Activated B cell treated with CpG ODN at 0.5 μM for 24 hours (primary cell): ENCODE measurements at regions of chr12 and their contacts with region 1.

Region 1: GRCh38 chr12:64403707-64404469 is at the start of gene XPOT:
- DNase-seq: peak; percentile 88
- ATAC-seq: peak; percentile 91
- H3K4me3 Mint-ChIP-seq: peak within 1 kb of the TSS; percentile 96
- H3K27ac Mint-ChIP-seq: peak within 1 kb of the TSS; percentile 96
- H3K4me1 Mint-ChIP-seq: peaks cover 16% of the 10 kb centered on the region
- H3K27me3 Mint-ChIP-seq: peaks cover 3% of the 10 kb centered on the region
- CTCF ChIP-seq: no peak
- total RNA-seq, gene XPOT: 81.3 and 96.2 TPM in 2 replicates

Region 2: GRCh38 chr12:62466594-62467491 is 1937.0 kb before region 1 on chr12 and contains the start of gene MON2:
- CTCF ChIA-PET with region 1: no interaction called
- POLR2A ChIA-PET with region 1: no interaction called
- intact Hi-C with region 1: loop called (anchors 5 kb)
- DNase-seq: peak; percentile 85
- ATAC-seq: peak; percentile 96
- H3K4me3 Mint-ChIP-seq: peak within 1 kb of the TSS; percentile 84
- H3K27ac Mint-ChIP-seq: peak within 1 kb of the TSS; percentile 84
- H3K4me1 Mint-ChIP-seq: peaks cover 28% of the 10 kb centered on the region
- H3K27me3 Mint-ChIP-seq: no peaks in the 10 kb centered on the region
- CTCF ChIP-seq: no peak
- total RNA-seq, gene MON2: 51.6 and 69.9 TPM in 2 replicates

Region 3: DNA sequence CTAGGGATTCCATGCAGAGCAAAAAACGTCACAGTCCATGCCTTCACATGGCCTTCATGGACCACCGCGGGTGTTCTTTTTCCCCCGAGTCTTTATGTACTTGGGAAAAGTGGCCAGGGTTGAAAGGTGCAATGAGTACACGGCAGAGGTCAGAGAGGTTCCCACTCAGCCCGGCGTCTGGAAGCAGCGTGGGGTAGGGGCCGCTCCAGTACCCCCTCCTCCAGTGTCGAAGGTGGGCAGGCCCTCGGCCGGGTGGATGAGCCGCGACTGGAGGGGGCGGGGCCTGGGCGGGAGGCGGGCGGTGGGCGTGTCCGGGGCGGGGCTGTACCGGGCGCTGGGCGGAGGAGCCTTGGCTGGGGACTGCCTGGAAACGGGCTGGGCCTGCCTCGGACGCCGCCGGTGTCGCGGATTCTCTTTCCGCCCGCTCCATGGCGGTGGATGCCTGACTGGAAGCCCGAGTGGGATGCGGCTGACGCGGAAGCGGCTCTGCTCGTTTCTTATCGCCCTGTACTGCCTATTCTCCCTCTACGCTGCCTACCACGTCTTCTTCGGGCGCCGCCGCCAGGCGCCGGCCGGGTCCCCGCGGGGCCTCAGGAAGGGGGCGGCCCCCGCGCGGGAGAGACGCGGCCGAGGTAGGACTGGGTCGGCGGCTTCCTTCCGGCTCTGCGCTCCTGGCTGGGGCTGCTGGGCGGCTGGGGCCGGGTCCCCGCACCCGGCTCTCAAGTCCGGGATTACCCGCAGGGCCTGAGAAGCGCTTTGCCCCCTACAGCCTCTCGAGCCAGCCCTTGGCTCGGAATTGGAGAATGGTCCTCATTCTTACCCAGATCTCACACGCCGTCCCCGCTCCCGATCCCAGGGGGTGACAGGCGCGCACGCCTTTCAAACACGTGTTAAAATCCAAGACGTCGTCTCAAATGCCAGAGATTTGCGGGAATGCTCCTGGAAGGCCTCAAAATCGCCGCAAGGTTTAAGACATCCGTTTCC is 624.1 kb before region 1 on chr12 and contains the start of gene RXYLT1:
- CTCF ChIA-PET with region 1: no interaction called
- POLR2A ChIA-PET with region 1: no interaction called
- intact Hi-C with region 1: loop called (anchors 1 kb)
- DNase-seq: peak; percentile 82
- ATAC-seq: peak; percentile 93
- H3K4me3 Mint-ChIP-seq: peak within 1 kb of the TSS; percentile 98
- H3K27ac Mint-ChIP-seq: peak within 1 kb of the TSS; percentile 90
- H3K4me1 Mint-ChIP-seq: peaks cover 20% of the 10 kb centered on the region
- H3K27me3 Mint-ChIP-seq: no peaks in the 10 kb centered on the region
- CTCF ChIP-seq: no peak
- total RNA-seq, gene RXYLT1: 16.3 and 22.7 TPM in 2 replicates

Region 4: DNA sequence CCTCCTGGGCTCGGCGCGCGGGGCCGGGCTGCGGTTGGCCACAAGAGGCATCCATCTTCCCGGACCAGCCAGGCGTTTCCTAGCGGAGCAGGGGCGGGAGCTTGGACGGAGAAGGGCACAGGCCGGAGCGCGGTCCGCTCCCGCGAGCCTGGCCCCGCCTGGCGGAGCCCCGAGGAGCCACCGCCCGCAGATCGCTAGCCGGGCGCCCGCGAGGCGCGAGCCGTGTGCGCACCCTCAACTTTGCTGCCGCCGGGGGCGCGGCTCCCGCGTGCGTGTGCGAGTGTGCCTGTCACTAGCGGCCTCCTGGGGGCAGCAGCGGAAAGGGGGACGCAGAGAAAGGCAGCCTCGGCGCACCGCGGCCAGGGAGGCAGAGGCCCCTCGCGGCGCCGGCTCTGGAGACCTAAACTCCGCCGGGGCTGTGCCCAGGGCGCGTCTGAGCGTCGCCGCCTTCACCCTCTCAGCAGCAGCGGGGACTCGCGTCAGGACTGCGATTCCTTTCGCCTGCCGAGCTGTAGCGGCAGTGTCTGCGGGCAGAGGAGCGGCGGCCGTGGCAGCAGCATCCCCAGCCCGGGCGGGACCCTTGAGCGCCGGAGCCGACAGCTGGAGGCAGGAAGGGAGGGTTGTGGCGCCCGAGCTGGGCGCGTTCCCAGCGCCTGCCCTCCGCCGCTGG is 560.0 kb before region 1 on chr12:
- CTCF ChIA-PET with region 1: no interaction called
- POLR2A ChIA-PET with region 1: no interaction called
- intact Hi-C with region 1: loop called (anchors 1 kb)
- DNase-seq: peak; percentile 69
- ATAC-seq: peak; percentile 92
- H3K4me3 Mint-ChIP-seq: peak overlapping the region; percentile 74
- H3K27ac Mint-ChIP-seq: no peak overlapping the region
- H3K4me1 Mint-ChIP-seq: peaks cover 9% of the 10 kb centered on the region
- H3K27me3 Mint-ChIP-seq: peaks cover 24% of the 10 kb centered on the region
- CTCF ChIP-seq: peak; percentile 43

Region 5: GRCh38 chr12:64222009-64222765 is 181.7 kb before region 1 on chr12 and contains the start of gene KICS2:
- CTCF ChIA-PET with region 1: no interaction called
- POLR2A ChIA-PET with region 1: interaction called, 6 read pairs
- intact Hi-C with region 1: loop called (anchors 1 kb)
- DNase-seq: peak; percentile 90
- ATAC-seq: peak; percentile 86
- H3K4me3 Mint-ChIP-seq: peak within 1 kb of the TSS; percentile 96
- H3K27ac Mint-ChIP-seq: peak within 1 kb of the TSS; percentile 97
- H3K4me1 Mint-ChIP-seq: peaks cover 27% of the 10 kb centered on the region
- H3K27me3 Mint-ChIP-seq: no peaks in the 10 kb centered on the region
- CTCF ChIP-seq: no peak
- total RNA-seq, gene KICS2: 16.5 and 16.8 TPM in 2 replicates

Region 6: DNA sequence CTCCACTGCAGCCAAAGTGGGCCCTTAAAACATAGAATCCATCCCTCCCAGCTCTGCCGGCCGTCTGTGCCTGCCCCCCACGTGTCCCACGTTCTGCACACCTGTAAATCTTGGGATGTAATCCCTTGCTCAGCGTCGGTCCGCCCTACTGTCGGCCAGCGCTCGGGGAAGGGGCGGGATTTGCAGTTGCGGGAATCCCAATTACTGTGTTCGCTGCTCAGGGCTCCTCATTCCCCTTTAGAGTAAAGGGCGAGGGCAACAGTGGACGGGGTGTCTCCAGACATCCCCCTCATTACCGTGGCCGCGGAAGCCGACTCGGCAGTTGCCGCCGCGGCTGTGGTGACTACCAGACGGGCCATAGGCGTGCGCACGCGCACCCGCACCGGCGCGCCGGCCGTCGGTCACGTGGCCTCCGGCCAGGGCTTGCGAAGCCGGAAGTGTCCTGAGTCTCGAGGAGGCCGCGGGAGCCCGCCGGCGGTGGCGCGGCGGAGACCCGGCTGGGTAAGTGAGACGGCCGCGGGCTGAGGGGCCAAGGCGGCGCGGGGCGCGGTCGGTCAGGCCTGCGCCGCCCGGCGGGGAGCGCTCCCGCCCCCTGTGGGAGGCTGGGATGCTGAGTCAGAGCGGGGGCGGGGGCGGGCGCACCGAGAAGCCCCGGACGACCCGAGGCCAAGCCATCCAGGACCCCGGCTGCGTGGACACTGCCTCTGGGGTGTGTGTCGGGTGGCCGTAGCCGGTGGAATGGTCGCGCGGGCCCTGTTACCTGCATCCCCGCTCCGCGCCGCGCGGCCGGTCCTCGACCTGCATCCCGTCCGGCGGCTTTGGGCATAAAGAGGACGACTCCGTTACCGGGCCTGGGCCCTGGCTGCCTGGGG is 48.0 kb after region 1 on chr12 and contains the start of gene TBK1:
- CTCF ChIA-PET with region 1: no interaction called
- POLR2A ChIA-PET with region 1: interaction called, 3 read pairs
- intact Hi-C with region 1: loop called (anchors 1 kb)
- DNase-seq: peak; percentile 82
- ATAC-seq: peak; percentile 82
- H3K4me3 Mint-ChIP-seq: peak within 1 kb of the TSS; percentile 97
- H3K27ac Mint-ChIP-seq: peak within 1 kb of the TSS; percentile 88
- H3K4me1 Mint-ChIP-seq: peaks cover 44% of the 10 kb centered on the region
- H3K27me3 Mint-ChIP-seq: no peaks in the 10 kb centered on the region
- CTCF ChIP-seq: no peak
- total RNA-seq, gene TBK1: 32.6 and 37.4 TPM in 2 replicates

Region 7: GRCh38 chr12:64759035-64759901 is 355.4 kb after region 1 on chr12 and contains the start of gene GNS:
- CTCF ChIA-PET with region 1: no interaction called
- POLR2A ChIA-PET with region 1: no interaction called
- intact Hi-C with region 1: loop called (anchors 1 kb)
- DNase-seq: peak; percentile 98
- ATAC-seq: peak; percentile 93
- H3K4me3 Mint-ChIP-seq: peak within 1 kb of the TSS; percentile 92
- H3K27ac Mint-ChIP-seq: peak within 1 kb of the TSS; percentile 83
- H3K4me1 Mint-ChIP-seq: peaks cover 41% of the 10 kb centered on the region
- H3K27me3 Mint-ChIP-seq: no peaks in the 10 kb centered on the region
- CTCF ChIP-seq: no peak
- total RNA-seq, gene GNS: 16.3 and 17.7 TPM in 2 replicates